ENCODE measurements at regions of chr2 and their contacts with region 1.

Region 1: DNA sequence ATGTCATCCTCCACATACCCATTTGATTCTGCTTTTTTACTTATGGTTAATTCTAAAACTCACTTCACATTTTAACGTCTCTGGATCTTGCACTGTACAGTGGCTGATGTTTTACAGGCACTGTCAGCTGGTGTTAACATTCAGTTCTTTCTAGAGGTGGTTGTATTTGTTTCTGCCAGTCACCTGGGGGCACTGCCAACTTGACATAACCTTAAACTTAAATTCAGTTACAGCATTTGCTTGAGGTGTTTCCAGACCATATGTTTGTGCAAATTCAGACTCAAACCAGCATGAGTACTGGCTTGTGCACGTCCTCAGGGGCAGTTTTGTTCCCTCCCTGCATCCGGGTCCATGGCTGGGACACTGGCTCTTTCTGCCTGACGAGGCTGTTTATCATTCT is 5.3 kb upstream of the TMEM185B start:
- DNase-seq: peak; percentile 57
- ATAC-seq: peak; percentile 46
- H3K4me3 ChIP-seq: no peak overlapping the region
- H3K27ac ChIP-seq: no peak overlapping the region
- H3K4me1 ChIP-seq: peaks cover 55% of the 10 kb centered on the region
- H3K27me3 ChIP-seq: no peaks in the 10 kb centered on the region
- CTCF ChIP-seq: peak; percentile 60

Region 2: GRCh38 chr2:120206022-120206581 is 22.4 kb before region 1 on chr2:
- CTCF ChIA-PET with region 1: no interaction called
- POLR2A ChIA-PET with region 1: no interaction called
- intact Hi-C with region 1: no loop called
- DNase-seq: peak; percentile 11
- ATAC-seq: peak; percentile 25
- H3K4me3 ChIP-seq: no peak overlapping the region
- H3K27ac ChIP-seq: no peak overlapping the region
- H3K4me1 ChIP-seq: no peaks in the 10 kb centered on the region
- H3K27me3 ChIP-seq: no peaks in the 10 kb centered on the region
- CTCF ChIP-seq: peak; percentile 61

Region 3: GRCh38 chr2:120287183-120288015 is 58.9 kb after region 1 on chr2:
- CTCF ChIA-PET with region 1: interaction called, 3 read pairs
- POLR2A ChIA-PET with region 1: interaction called, 4 read pairs
- intact Hi-C with region 1: loop called (anchors 2 kb)
- DNase-seq: peak; percentile 91
- ATAC-seq: peak; percentile 92
- H3K4me3 ChIP-seq: peak overlapping the region; percentile 34
- H3K27ac ChIP-seq: peak overlapping the region; percentile 88
- H3K4me1 ChIP-seq: peaks cover 39% of the 10 kb centered on the region
- H3K27me3 ChIP-seq: no peaks in the 10 kb centered on the region
- CTCF ChIP-seq: no peak

Region 4: GRCh38 chr2:120305296-120305695 is 76.8 kb after region 1 on chr2:
- CTCF ChIA-PET with region 1: no interaction called
- POLR2A ChIA-PET with region 1: no interaction called
- intact Hi-C with region 1: no loop called
- DNase-seq: peak; percentile 28
- ATAC-seq: peak; percentile 71
- H3K4me3 ChIP-seq: no peak overlapping the region
- H3K27ac ChIP-seq: no peak overlapping the region
- H3K4me1 ChIP-seq: no peaks in the 10 kb centered on the region
- H3K27me3 ChIP-seq: no peaks in the 10 kb centered on the region
- CTCF ChIP-seq: peak; percentile 61

Measured in PC-3 (cell line).